Activated CD4-positive, alpha-beta memory T cell treated with anti-CD3 and anti-CD28 coated beads for 36 hours (primary cell): ENCODE measurements at regions of chr2 and their contacts with region 1.

Region 1: GRCh38 chr2:75064691-75065396 is 106.4 kb downstream of the POLE4 start:
- DNase-seq: peak; percentile 66
- H3K4me3 Mint-ChIP-seq: no peak overlapping the region
- H3K27ac Mint-ChIP-seq: no peak overlapping the region
- H3K4me1 Mint-ChIP-seq: no peaks in the 10 kb centered on the region
- H3K27me3 Mint-ChIP-seq: no peaks in the 10 kb centered on the region

Region 2: DNA sequence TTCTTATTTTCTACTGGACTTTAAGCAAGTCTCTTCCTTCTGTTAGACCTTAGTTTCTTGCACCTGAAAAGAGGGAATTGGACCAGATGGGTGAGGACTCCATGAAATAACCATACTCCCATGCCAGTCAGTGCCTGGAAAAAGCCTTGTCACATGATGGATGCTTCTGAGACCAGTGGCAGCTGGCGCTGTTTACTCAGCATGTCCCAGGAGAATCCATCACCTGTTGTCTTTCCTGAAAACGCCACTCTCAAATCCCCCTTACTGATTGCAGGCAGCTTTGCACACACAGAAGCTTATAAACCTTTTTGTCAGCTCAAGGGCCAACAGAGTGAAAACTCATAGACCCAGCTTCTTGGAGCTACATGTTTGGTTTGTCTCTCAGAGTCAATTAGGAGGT is 11.2 kb after region 1 on chr2:
- CTCF ChIA-PET with region 1: interaction called, 32 read pairs
- POLR2A ChIA-PET with region 1: no interaction called
- intact Hi-C with region 1: no loop called
- DNase-seq: no peak
- H3K4me3 Mint-ChIP-seq: no peak overlapping the region
- H3K27ac Mint-ChIP-seq: no peak overlapping the region
- H3K4me1 Mint-ChIP-seq: no peaks in the 10 kb centered on the region
- H3K27me3 Mint-ChIP-seq: no peaks in the 10 kb centered on the region

Region 3: DNA sequence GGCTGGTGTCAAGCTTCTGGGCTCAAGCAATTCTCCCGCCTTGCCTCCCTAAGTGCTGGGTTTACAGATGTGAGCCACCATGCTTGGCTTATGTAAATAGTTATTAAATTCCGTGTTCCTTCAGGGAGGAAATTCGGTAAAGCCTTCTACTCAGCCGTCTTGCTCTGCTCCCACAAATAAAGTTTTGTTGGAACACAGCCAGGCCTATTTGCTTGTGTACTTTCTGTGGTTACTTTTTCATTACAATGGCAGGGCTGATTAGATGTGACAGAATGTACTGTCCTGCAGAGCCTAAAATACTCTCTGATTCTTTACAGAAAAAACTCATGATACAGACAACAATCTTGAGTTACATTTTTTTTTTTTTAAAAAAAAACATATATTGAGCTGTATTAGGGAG is 203.3 kb after region 1 on chr2:
- CTCF ChIA-PET with region 1: no interaction called
- POLR2A ChIA-PET with region 1: no interaction called
- intact Hi-C with region 1: no loop called
- DNase-seq: no peak
- H3K4me3 Mint-ChIP-seq: no peak overlapping the region
- H3K27ac Mint-ChIP-seq: no peak overlapping the region
- H3K4me1 Mint-ChIP-seq: no peaks in the 10 kb centered on the region
- H3K27me3 Mint-ChIP-seq: peaks cover 9% of the 10 kb centered on the region